Activated naive CD4-positive, alpha-beta T cell treated with anti-CD3 and anti-CD28 coated beads for 36 hours (primary cell): ENCODE measurements at regions of chr1 and their contacts with region 1.

Region 1: DNA sequence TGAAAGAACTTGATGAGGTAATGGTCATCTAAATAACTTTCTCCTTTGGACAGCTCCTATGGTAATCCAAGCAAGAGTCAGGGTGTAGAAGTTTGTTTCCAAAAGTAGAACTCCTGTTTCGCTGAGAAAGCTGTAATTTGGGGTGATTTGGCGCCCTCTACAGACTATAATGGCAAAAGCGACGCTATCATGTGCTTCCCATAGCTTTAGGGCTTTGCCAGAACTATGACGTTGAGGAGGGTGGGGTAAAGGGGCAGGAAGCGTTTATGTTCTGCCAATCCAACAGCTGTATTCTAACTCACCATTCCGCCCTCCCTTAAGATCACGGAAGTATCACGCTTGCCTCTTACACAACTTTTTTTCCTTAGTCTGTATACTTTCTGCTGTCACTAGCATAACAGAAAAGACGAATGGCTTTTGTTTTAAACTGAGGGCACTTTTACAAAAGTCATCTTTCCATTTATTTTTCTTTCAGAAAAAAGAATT is at the start of gene FMO4:
- DNase-seq: peak; percentile 92
- H3K4me3 Mint-ChIP-seq: peak within 1 kb of the TSS; percentile 71
- H3K27ac Mint-ChIP-seq: peak within 1 kb of the TSS; percentile 69
- H3K4me1 Mint-ChIP-seq: peaks cover 14% of the 10 kb centered on the region
- H3K27me3 Mint-ChIP-seq: no peaks in the 10 kb centered on the region
- total RNA-seq, gene FMO4: 2.0 to 2.1 TPM

Region 2: GRCh38 chr1:169794530-169795416 is 1519.1 kb before region 1 on chr1 and contains the start of gene METTL18:
- CTCF ChIA-PET with region 1: no interaction called
- intact Hi-C with region 1: loop called (anchors 1 kb)
- DNase-seq: peak; percentile 97
- H3K4me3 Mint-ChIP-seq: peak within 1 kb of the TSS; percentile 99
- H3K27ac Mint-ChIP-seq: peak within 1 kb of the TSS; percentile 99
- H3K4me1 Mint-ChIP-seq: peaks cover 48% of the 10 kb centered on the region
- H3K27me3 Mint-ChIP-seq: no peaks in the 10 kb centered on the region
- total RNA-seq, gene METTL18: 10.6 to 11.1 TPM

Region 3: DNA sequence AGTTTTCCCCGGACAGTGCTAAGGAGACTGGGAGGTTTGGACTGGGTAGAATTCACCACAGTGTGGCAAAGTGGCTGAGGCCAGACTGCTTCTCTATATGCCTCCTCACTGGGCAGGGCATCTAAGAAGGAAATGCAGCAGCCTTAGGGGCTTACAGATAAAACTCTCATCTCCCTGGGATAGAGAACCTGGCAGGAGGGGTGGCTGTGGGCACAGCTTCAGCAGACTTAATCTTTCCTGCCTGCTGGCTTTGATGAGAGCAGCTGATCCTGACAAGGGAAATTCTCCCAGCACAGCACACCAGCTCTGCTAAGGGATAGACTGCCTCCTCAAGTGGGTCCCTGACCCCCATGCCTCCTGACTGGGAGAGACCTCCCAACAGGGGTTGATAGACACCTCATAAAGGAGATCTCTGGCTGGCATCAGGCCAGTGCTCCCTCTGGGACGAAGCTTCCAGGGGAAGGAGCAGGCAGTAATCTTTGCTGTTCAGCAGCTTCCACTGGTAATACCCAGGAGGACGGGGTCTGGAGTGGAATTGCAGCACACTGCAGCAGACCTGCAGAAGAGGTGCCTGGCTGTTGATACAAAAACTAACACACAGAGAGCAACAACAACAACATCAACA is 1264.6 kb before region 1 on chr1:
- CTCF ChIA-PET with region 1: no interaction called
- intact Hi-C with region 1: no loop called
- DNase-seq: no peak
- H3K4me3 Mint-ChIP-seq: no peak overlapping the region
- H3K27ac Mint-ChIP-seq: no peak overlapping the region
- H3K4me1 Mint-ChIP-seq: peaks cover 6% of the 10 kb centered on the region
- H3K27me3 Mint-ChIP-seq: no peaks in the 10 kb centered on the region

Region 4: GRCh38 chr1:170531758-170532657 is 781.9 kb before region 1 on chr1 and contains the start of gene GORAB:
- CTCF ChIA-PET with region 1: no interaction called
- intact Hi-C with region 1: loop called (anchors 5 kb)
- DNase-seq: peak; percentile 93
- H3K4me3 Mint-ChIP-seq: no peak within 1 kb of the TSS
- H3K27ac Mint-ChIP-seq: no peak within 1 kb of the TSS
- H3K4me1 Mint-ChIP-seq: peaks cover 13% of the 10 kb centered on the region
- H3K27me3 Mint-ChIP-seq: no peaks in the 10 kb centered on the region
- total RNA-seq, gene GORAB: 9.5 TPM

Region 5: DNA sequence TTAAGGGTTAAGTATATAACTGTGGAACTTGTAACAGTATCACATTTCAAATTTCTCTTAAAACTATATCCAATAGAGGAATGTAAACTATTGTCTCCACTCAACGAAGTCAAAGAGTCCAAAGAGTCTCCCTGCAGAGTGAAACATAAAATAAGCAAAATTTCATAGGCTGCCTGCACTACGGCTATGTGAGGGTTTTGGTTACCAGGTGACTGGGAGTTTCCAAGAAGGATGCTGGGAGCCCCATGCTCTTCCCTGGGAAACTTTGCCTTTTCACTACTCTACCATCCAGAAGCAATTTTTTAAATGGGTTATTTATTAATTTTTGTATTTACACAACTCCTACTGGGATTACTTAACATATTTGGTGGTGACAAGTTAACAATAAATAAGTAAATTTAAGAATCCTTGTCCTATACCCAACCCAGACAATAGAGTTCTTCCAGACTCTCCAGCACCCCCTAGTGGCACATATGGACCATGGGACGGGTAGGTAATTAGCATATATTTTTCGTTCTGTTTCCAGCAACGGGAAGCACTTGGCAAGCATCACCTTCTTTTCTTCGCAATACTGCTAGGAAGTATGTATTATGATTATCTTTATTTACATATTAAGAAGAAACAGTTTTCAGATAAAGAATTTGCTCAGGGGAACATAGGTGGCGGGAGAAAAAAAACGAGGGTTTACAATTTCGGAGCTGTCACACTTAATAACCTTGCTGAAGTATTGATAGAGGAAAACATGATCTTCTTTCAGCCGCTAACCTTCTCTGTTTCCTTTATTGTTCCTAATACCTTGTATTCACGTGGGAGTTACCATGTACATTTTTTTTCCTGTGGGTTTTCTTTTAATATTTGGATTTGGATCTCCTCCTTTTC is 125.3 kb before region 1 on chr1:
- CTCF ChIA-PET with region 1: interaction called, 7 read pairs
- intact Hi-C with region 1: loop called (anchors 1 kb)
- DNase-seq: peak; percentile 65
- H3K4me3 Mint-ChIP-seq: no peak overlapping the region
- H3K27ac Mint-ChIP-seq: no peak overlapping the region
- H3K4me1 Mint-ChIP-seq: no peaks in the 10 kb centered on the region
- H3K27me3 Mint-ChIP-seq: peaks cover 5% of the 10 kb centered on the region

Region 6: DNA sequence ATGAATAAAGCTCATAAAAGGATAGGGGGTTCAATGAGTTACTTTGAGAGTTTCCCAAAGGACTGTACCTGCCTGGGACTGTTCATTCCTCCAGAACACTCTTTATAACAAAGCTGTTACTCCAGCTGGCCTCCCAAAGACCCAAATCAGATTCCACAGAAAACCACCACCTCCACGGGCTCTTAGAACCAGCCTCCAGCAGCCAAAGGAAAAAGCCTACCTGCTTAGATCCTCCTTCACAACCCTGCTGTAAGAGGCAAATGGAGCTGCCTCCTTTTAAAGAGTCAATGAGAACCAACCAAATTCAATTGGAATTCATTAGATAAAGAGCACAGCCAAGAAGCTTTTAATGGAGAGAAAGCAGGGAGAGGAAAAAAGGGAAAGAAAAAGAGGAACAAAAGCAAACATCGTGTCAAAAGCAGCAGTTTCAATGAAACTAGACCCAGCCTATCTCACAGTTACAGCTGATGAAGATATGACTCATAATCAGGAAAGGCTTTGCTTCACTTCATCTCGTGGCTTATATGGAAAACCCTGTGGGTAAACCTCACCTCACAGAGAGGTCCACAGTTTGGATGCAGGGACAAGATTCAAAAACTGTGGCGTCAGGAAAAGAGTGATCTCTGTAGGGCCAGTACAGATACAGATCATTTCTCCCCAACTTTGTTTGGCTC is 27.7 kb before region 1 on chr1:
- CTCF ChIA-PET with region 1: interaction called, 8 read pairs
- intact Hi-C with region 1: loop called (anchors 2 kb)
- DNase-seq: no peak
- H3K4me3 Mint-ChIP-seq: no peak overlapping the region
- H3K27ac Mint-ChIP-seq: no peak overlapping the region
- H3K4me1 Mint-ChIP-seq: no peaks in the 10 kb centered on the region
- H3K27me3 Mint-ChIP-seq: peaks cover 13% of the 10 kb centered on the region

Region 7: DNA sequence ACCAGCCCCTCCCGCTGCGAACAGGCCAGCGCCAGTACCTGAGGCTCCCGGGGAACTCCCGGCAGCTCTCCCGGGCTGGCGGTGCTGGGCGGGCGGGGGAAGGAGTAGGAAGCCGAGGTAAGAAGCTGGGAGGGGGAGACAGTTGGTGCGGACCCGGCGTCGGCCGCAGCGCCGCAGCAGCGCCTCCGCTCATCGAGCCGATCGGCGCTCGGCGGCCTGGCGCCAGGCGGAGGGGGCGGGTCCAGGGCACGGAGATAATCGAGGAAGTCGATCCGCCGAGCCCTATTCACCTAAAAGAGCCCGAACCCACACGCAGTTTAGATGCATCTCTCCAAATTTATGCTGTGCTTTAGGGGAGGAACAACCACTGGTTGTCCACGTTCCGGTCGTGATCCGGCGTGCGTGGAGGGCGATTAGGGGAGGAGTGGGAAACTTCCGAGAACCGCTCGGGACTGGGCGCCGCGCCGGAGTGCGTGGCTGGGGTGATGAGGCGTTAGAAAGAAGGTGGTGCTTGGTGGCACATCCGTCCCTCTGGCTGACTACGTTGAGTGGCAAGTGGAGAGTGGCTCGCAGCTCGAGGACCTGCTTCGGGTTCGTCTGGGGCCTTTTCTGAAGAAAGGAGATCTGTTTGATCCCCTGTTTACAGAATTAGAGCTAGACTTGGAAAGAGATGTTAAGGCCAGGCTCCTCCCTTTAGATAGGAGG is 428.1 kb after region 1 on chr1 and contains the start of gene VAMP4:
- CTCF ChIA-PET with region 1: no interaction called
- intact Hi-C with region 1: loop called (anchors 1 kb)
- DNase-seq: peak; percentile 90
- H3K4me3 Mint-ChIP-seq: peak within 1 kb of the TSS; percentile 96
- H3K27ac Mint-ChIP-seq: peak within 1 kb of the TSS; percentile 99
- H3K4me1 Mint-ChIP-seq: peaks cover 40% of the 10 kb centered on the region
- H3K27me3 Mint-ChIP-seq: no peaks in the 10 kb centered on the region
- total RNA-seq, gene VAMP4: 10.5 to 10.9 TPM